Psoas muscle (tissue), 8 donors: ENCODE measurements at regions of chr2 and their contacts with region 1.

Region 1: GRCh38 chr2:213119061-213119856 is 32.2 kb downstream of the IKZF2 start:
- DNase-seq: no peak
- ATAC-seq: peak; percentile 71 to 94 (median 82)
- H3K4me3 ChIP-seq: no peak overlapping the region
- H3K27ac ChIP-seq: peak overlapping the region; percentile 51
- H3K4me1 ChIP-seq: peaks cover 60% of the 10 kb centered on the region
- H3K27me3 ChIP-seq: no peaks in the 10 kb centered on the region
- CTCF ChIP-seq: no peak

Region 2: GRCh38 chr2:213104092-213104902 is 15.0 kb before region 1 on chr2:
- intact Hi-C with region 1: loop called in 1 of 2 experiments (anchors 1 kb)
- DNase-seq: no peak
- ATAC-seq: peak; percentile 64 to 71 (median 66)
- H3K4me3 ChIP-seq: peak overlapping the region; percentile 56
- H3K27ac ChIP-seq: peak overlapping the region; percentile 62
- H3K4me1 ChIP-seq: peaks cover 70% of the 10 kb centered on the region
- H3K27me3 ChIP-seq: no peaks in the 10 kb centered on the region
- CTCF ChIP-seq: no peak